Activated naive CD4-positive, alpha-beta T cell treated with anti-CD3 and anti-CD28 coated beads for 36 hours (primary cell): ENCODE measurements at regions of chr11 and their contacts with region 1.

Region 1: GRCh38 chr11:128238521-128239265 is 348.7 kb downstream of the ETS1 start:
- DNase-seq: no peak
- H3K4me3 Mint-ChIP-seq: peak overlapping the region; percentile 41
- H3K27ac Mint-ChIP-seq: peak overlapping the region; percentile 55
- H3K4me1 Mint-ChIP-seq: peaks cover 31% of the 10 kb centered on the region
- H3K27me3 Mint-ChIP-seq: no peaks in the 10 kb centered on the region

Region 2: GRCh38 chr11:128039140-128040021 is 199.3 kb before region 1 on chr11:
- CTCF ChIA-PET with region 1: no interaction called
- intact Hi-C with region 1: loop called (anchors 5 kb)
- DNase-seq: peak; percentile 89
- H3K4me3 Mint-ChIP-seq: peak overlapping the region; percentile 40
- H3K27ac Mint-ChIP-seq: peak overlapping the region; percentile 92
- H3K4me1 Mint-ChIP-seq: peaks cover 47% of the 10 kb centered on the region
- H3K27me3 Mint-ChIP-seq: no peaks in the 10 kb centered on the region

Region 3: GRCh38 chr11:128098781-128099180 is 139.9 kb before region 1 on chr11:
- CTCF ChIA-PET with region 1: no interaction called
- intact Hi-C with region 1: loop called (anchors 5 kb)
- DNase-seq: peak; percentile 9
- H3K4me3 Mint-ChIP-seq: no peak overlapping the region
- H3K27ac Mint-ChIP-seq: peak overlapping the region; percentile 76
- H3K4me1 Mint-ChIP-seq: peaks cover 39% of the 10 kb centered on the region
- H3K27me3 Mint-ChIP-seq: no peaks in the 10 kb centered on the region

Region 4: GRCh38 chr11:128210148-128210940 is 28.3 kb before region 1 on chr11:
- CTCF ChIA-PET with region 1: no interaction called
- intact Hi-C with region 1: loop called (anchors 2 kb)
- DNase-seq: peak; percentile 46
- H3K4me3 Mint-ChIP-seq: no peak overlapping the region
- H3K27ac Mint-ChIP-seq: no peak overlapping the region
- H3K4me1 Mint-ChIP-seq: peaks cover 17% of the 10 kb centered on the region
- H3K27me3 Mint-ChIP-seq: no peaks in the 10 kb centered on the region

Region 5: GRCh38 chr11:128261011-128261421 is 22.3 kb after region 1 on chr11:
- CTCF ChIA-PET with region 1: no interaction called
- intact Hi-C with region 1: no loop called
- DNase-seq: no peak
- H3K4me3 Mint-ChIP-seq: no peak overlapping the region
- H3K27ac Mint-ChIP-seq: no peak overlapping the region
- H3K4me1 Mint-ChIP-seq: no peaks in the 10 kb centered on the region
- H3K27me3 Mint-ChIP-seq: no peaks in the 10 kb centered on the region

Region 6: GRCh38 chr11:128582496-128583366 is 344.0 kb after region 1 on chr11:
- CTCF ChIA-PET with region 1: no interaction called
- intact Hi-C with region 1: loop called (anchors 2 kb)
- DNase-seq: peak; percentile 50
- H3K4me3 Mint-ChIP-seq: peak overlapping the region; percentile 69
- H3K27ac Mint-ChIP-seq: peak overlapping the region; percentile 78
- H3K4me1 Mint-ChIP-seq: peaks cover 62% of the 10 kb centered on the region
- H3K27me3 Mint-ChIP-seq: no peaks in the 10 kb centered on the region